GM10248 (cell line): ENCODE measurements at regions of chr15 and their contacts with region 1.

Region 1: DNA sequence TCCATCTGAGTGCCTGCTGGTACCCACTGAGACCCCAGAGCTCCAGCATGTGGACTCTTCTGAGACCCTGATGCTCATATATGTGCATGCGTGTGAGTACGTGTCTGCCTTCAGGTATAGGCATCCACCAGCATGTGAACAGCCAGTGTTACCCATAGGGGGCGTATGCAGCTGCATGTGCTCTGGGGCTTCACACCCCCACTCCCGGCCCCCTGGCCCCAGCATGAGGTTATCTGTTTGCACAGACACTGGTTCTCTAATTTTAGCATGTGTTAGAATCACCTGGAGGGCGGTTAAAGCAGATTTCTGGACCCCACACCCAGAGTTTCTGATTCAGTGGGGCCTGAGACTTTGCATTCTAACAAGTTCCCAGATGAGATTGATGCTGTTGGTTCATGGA is 824 bp upstream of the CILP start:
- DNase-seq: peak; percentile 74
- CTCF ChIP-seq: peak; percentile 49

Region 2: GRCh38 chr15:65156692-65157091 is 55.4 kb before region 1 on chr15:
- CTCF ChIA-PET with region 1: no interaction called
- POLR2A ChIA-PET with region 1: no interaction called
- DNase-seq: no peak
- CTCF ChIP-seq: no peak

Region 3: DNA sequence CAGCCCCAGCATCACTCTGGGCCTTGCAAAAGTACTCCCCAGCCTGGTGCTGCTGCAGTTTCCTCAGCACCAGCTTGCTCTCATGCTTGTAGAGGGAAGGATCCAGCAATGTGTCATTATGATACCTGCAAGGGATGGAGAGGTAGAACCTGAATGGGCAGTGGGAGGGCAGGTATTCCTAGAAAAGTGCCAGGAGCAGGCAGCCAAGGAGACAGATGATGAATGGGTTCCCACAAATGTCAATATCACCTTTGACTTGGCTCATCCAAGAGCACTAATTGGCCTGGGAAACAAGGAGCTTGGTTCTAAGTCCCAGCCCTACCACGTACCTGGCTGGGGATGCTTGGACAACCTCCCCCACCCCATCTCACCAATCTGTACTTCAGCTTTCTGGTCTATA is 10.2 kb before region 1 on chr15:
- CTCF ChIA-PET with region 1: interaction called, 22 read pairs
- POLR2A ChIA-PET with region 1: no interaction called
- DNase-seq: no peak
- CTCF ChIP-seq: no peak

Region 4: GRCh38 chr15:65222891-65223290 is 10.8 kb after region 1 on chr15:
- CTCF ChIA-PET with region 1: interaction called, 14 read pairs
- POLR2A ChIA-PET with region 1: no interaction called
- DNase-seq: no peak
- CTCF ChIP-seq: no peak

Region 5: DNA sequence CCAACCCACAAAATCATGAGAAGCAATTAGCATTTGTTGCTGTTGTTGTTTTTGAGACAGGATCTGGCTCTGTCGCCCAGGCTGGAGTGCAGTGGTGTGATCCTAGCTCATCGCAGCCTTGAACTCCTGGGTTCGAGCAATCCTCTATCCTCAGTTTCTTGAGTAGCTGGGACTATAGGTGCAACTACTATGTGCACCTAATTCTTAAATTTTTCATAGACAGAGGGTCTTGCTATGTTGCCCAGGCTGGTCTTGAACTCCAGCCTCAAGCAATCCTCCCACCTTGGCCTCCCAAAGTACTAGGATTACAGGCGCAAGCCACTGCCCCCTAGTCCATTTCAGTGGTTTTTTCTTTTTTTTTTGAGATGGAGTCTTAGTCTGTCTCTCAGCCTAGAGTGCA is 56.3 kb after region 1 on chr15:
- CTCF ChIA-PET with region 1: interaction called, 15 read pairs
- POLR2A ChIA-PET with region 1: no interaction called
- DNase-seq: no peak
- CTCF ChIP-seq: no peak